ENCODE measurements at regions of chr9 and their contacts with region 1.

Region 1: GRCh38 chr9:38127271-38127882 is 58.4 kb upstream of the SHB start:
- DNase-seq: no peak
- H3K4me3 ChIP-seq: no peak overlapping the region
- H3K27ac ChIP-seq: no peak overlapping the region
- H3K4me1 ChIP-seq: no peaks in the 10 kb centered on the region
- H3K27me3 ChIP-seq: no peaks in the 10 kb centered on the region
- CTCF ChIP-seq: no peak
- POLR2A ChIP-seq: no peak

Region 2: DNA sequence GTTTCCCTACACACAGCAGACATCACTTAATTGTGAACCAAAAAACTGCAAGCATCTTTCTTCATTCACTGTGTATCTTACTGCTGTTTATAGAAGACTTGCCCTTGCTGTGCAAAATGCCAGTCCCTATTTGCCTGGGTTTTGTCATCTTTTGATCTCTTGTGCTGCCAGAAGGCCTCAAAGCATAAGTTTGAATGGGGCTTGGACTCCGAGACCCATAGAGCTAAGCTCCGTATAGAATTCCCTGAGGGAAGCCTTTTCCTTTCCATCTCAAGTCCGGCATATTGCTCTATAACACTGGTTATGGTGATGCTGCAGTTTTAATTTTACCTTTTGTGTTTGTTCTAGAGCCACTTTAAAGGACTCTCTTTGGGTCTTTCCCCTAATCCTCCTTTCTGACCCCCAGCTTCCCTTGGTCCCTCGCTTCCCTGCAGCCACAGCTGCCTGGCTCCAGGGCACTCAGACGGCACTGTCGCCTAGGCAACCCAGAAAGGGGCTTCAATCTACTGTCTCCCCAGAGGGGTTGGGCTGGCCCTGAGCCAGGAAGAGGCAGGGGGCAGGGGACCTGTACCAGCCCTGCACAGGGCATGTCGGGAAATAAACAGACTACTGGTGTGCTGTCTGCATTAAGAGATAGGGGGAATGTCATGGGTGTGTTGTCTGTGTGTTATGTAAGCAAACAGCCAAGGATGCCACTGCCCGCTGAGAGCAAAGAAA is 1628.0 kb before region 1 on chr9:
- intact Hi-C with region 1: no loop called
- DNase-seq: no peak
- H3K4me3 ChIP-seq: no peak overlapping the region
- H3K27ac ChIP-seq: no peak overlapping the region
- H3K4me1 ChIP-seq: no peaks in the 10 kb centered on the region
- H3K27me3 ChIP-seq: no peaks in the 10 kb centered on the region
- CTCF ChIP-seq: no peak
- POLR2A ChIP-seq: no peak

Region 3: DNA sequence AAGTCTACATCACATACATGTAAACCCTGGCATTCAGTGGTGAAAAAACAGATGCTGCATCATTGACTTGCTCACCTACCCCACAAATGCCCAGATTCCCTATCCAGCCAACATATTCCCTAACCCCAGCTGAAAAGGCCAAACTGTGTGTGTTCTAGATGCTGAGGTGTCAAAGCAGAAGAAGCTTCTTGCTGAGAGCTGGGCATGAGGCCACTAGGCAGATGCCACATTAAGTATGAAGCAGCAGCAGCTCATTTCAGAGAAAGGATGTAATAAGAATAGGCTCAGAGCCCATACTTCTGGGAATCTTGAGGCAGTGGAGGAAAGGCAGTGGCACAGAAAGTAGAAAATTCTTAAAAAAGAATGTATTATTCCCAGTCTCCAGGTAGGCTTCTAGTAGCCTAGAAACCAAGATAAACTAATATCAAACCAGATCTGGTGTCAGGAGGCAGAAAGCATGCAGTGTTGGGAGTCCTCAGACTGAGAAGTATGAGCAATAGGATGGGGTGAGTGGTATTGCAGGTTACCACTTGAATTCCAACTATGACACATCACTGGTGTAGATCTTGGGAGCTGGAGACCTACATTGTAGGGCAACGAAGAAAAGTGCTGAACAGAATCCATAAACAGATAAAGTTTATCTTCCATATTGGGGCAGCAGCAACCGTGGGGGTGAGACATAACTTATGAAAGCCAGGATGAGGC is 776.7 kb before region 1 on chr9:
- intact Hi-C with region 1: loop called (anchors 5 kb)
- DNase-seq: no peak
- H3K4me3 ChIP-seq: no peak overlapping the region
- H3K27ac ChIP-seq: no peak overlapping the region
- H3K4me1 ChIP-seq: no peaks in the 10 kb centered on the region
- H3K27me3 ChIP-seq: no peaks in the 10 kb centered on the region
- CTCF ChIP-seq: no peak
- POLR2A ChIP-seq: no peak

Measured in breast epithelium (tissue), 4 donors.